BJ (cell line): ENCODE measurements at regions of chr14 and their contacts with region 1.

Region 1: GRCh38 chr14:68060198-68060597 is 240.6 kb downstream of the RAD51B start:
- DNase-seq: no peak
- H3K4me3 ChIP-seq: no peak overlapping the region
- H3K27me3 ChIP-seq: no peaks in the 10 kb centered on the region
- CTCF ChIP-seq: no peak

Region 2: DNA sequence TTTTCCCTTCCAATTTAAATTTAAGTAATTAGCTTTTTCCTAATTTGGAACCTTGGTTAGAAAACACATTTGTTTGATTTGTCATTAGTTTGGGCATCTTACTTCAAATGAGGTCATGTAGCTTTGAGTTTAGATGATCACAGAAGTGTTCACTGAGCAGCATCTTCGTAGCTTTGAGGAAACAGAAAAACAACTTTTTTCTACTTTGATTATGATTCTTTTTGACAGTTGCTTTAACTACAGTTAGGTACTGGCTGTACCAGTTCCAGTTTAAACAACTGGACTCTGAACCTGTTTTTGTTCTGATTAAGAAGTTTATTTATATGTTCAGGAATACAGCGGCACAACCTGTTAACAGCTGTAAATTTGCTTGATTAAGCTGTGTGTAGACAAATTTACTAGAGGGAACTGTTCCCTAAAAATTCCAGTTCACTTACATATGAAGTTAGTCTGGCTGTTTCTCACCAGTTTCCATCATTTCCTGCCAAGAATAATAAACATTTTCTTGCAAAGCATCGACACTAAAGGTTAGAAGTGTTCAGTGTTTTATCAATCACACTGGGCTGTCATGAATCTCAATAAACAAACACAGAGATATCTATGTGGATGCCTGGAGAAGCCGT is 48.7 kb before region 1 on chr14:
- CTCF ChIA-PET with region 1: no interaction called
- POLR2A ChIA-PET with region 1: no interaction called
- DNase-seq: no peak
- H3K4me3 ChIP-seq: no peak overlapping the region
- H3K27me3 ChIP-seq: no peaks in the 10 kb centered on the region
- CTCF ChIP-seq: no peak

Region 3: GRCh38 chr14:68041876-68042354 is 18.3 kb before region 1 on chr14:
- CTCF ChIA-PET with region 1: no interaction called
- POLR2A ChIA-PET with region 1: interaction called, 10 read pairs
- DNase-seq: no peak
- H3K4me3 ChIP-seq: no peak overlapping the region
- H3K27me3 ChIP-seq: no peaks in the 10 kb centered on the region
- CTCF ChIP-seq: no peak